ENCODE measurements at regions of chr2 and their contacts with region 1.

Region 1: DNA sequence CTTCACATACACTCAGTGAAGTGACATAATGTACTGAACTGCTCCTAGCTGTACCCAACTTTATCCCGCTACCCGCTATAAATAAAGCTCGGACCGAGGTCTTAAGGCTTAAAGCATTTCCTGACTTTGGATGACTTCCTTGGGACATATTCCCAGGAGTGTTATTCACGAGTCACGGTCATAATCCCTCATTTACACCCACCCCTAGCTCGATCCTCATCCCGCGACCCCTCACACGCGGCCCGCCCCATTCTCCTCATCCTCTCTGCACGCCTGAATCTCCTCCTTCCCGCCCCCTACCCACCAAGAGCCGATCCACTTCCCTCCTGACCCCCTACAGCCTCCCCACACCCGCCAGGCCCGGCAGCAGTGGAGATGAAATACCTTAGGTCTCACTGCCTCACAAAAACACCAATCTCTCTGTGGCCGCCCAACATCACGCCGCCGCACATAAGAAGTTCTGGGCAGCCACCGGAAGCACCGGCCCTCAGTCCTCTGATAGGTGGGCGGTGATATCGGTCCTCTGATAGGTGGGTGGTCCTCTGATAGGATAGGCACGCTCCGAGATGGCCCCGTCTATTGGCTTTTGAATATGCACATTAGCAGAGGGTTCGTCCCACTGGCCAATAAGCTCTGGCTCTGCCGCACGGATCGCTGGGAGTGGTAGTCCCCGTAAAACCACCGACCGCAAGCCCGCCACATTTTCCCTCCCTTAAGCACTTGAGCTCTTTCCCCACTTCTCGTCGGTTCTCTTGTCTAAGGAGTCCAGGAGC is at the start of gene WDCP:
- DNase-seq: peak; percentile 98 to 99 (median 98)
- H3K4me3 ChIP-seq: peak within 1 kb of the TSS; percentile 63 to 94 (median 85)
- H3K27ac ChIP-seq: peak within 1 kb of the TSS; percentile 58 to 68
- H3K4me1 ChIP-seq: peaks cover 5 to 34% (median 27%) of the 10 kb centered on the region in 4 experiments
- H3K27me3 ChIP-seq: peaks cover 0 to 37% (median 15%) of the 10 kb centered on the region in 5 experiments

Region 2: GRCh38 chr2:24058564-24059271 is 11.6 kb after region 1 on chr2:
- CTCF ChIA-PET with region 1: interaction called, 15 read pairs
- POLR2A ChIA-PET with region 1: no interaction called
- DNase-seq: peak in 1 of 3 donors; percentile 21
- H3K4me3 ChIP-seq: no peak overlapping the region
- H3K27ac ChIP-seq: no peak overlapping the region
- H3K4me1 ChIP-seq: no peaks in the 10 kb centered on the region
- H3K27me3 ChIP-seq: peaks cover 0 to 3% (median 0%) of the 10 kb centered on the region in 5 experiments

Region 3: GRCh38 chr2:24075915-24076848 is 29.1 kb after region 1 on chr2 and contains the start of gene SF3B6:
- CTCF ChIA-PET with region 1: interaction called, 9 read pairs
- POLR2A ChIA-PET with region 1: interaction called, 12 read pairs
- DNase-seq: peak; percentile 99 to 100 (median 100)
- H3K4me3 ChIP-seq: peak within 1 kb of the TSS; percentile 80 to 99 (median 92)
- H3K27ac ChIP-seq: peak within 1 kb of the TSS; percentile 84 to 93
- H3K4me1 ChIP-seq: peaks cover 13 to 27% (median 19%) of the 10 kb centered on the region in 4 experiments
- H3K27me3 ChIP-seq: no peaks in the 10 kb centered on the region

Region 4: GRCh38 chr2:24181849-24182248 is 134.7 kb after region 1 on chr2:
- CTCF ChIA-PET with region 1: no interaction called
- POLR2A ChIA-PET with region 1: no interaction called
- DNase-seq: no peak
- H3K4me3 ChIP-seq: no peak overlapping the region
- H3K27ac ChIP-seq: no peak overlapping the region
- H3K4me1 ChIP-seq: peaks cover 0 to 7% (median 0%) of the 10 kb centered on the region in 4 experiments
- H3K27me3 ChIP-seq: no peaks in the 10 kb centered on the region

Region 5: DNA sequence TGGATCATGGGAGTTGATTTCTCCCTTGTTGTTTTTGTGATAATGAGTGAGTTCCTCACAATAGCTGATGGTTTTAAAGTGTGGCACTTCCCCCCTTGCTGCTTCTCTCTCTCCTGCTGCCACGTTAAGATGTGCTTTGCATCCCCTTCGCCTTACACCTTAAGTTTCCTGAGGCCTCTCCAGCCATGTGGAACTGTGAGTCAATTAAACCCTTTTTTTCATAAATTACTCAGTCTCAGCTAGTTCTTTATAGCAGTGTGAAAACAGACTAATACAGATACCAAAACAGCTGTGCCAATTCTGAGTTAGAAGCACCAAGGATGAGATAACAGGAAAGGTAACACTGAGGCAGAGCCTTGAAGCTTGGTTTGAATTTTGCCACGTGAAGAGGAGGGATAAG is 268.6 kb after region 1 on chr2:
- CTCF ChIA-PET with region 1: no interaction called
- POLR2A ChIA-PET with region 1: no interaction called
- DNase-seq: peak in 1 of 3 donors; percentile 32
- H3K4me3 ChIP-seq: no peak overlapping the region
- H3K27ac ChIP-seq: no peak overlapping the region
- H3K4me1 ChIP-seq: peaks cover 0 to 6% (median 2%) of the 10 kb centered on the region in 4 experiments
- H3K27me3 ChIP-seq: no peaks in the 10 kb centered on the region

Measured in common myeloid progenitor, CD34-positive (primary cell).